Common myeloid progenitor, CD34-positive (primary cell): ENCODE measurements at regions of chr2 and their contacts with region 1.

Region 1: GRCh38 chr2:134245340-134245984 is 8.4 kb upstream of the MGAT5 start:
- DNase-seq: peak; percentile 78 to 91 (median 90)
- H3K4me3 ChIP-seq: peak overlapping the region in 1 of 7 experiments; percentile 36
- H3K27ac ChIP-seq: no peak overlapping the region
- H3K4me1 ChIP-seq: peaks cover 5 to 23% (median 15%) of the 10 kb centered on the region in 4 experiments
- H3K27me3 ChIP-seq: no peaks in the 10 kb centered on the region

Region 2: DNA sequence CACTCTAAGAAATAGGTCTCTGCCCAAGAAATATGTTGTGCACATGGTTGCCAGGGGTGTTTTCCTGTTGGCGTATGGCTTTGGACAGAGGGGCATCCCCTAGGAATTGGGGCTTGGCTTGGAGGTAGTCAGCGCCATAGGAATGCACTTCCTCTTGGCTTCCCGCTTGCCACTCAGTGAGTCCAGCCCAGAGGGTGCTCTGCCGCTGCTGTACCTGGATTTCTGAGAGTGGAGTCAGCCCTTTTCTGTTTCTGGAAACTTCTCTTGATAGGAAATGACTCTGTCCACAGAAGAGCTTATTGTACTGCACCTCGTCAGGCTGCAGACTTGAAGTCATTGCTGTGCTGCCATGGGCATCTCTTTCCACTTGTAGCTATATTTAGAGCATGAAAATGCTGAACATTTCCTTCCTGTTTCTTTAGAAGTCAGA is 108.3 kb before region 1 on chr2:
- CTCF ChIA-PET with region 1: interaction called, 13 read pairs
- POLR2A ChIA-PET with region 1: no interaction called
- DNase-seq: peak in 2 of 3 donors; percentile 61 to 76
- H3K4me3 ChIP-seq: peak overlapping the region in 6 of 7 experiments; percentile 11 to 68 (median 42)
- H3K27ac ChIP-seq: peak overlapping the region in 1 of 2 experiments; percentile 16
- H3K4me1 ChIP-seq: peaks cover 5 to 40% (median 20%) of the 10 kb centered on the region in 4 experiments
- H3K27me3 ChIP-seq: no peaks in the 10 kb centered on the region

Region 3: DNA sequence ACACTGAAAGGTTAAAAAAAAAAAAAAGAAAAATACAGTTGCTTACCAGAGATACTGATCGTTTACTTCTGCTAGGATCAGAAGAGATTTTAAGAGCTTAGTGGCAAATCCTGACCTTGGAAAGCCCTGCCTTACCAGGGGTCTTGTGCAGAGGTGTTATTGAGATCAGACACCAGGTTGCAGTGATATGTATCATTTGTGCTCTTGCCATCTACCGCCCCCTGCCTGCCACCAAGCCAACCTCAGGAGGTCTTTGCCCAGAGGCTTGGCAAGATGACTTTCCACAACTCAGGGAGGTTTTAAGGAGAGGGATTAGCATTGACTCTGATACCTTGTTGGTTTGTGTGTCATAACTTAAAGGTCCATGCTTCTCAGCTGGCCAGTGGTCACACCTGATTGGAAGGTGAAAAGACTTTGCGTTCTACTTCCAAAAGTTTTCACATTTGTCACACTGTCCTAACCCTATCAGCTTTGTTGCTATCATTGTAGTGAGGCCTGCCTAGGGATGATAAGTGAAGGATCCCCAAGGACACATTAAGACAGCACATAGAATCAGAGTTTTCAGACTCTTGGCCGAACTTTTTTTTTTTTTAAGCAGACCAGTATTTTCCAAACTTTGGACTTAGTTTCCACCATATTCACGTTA is 37.8 kb before region 1 on chr2:
- CTCF ChIA-PET with region 1: interaction called, 20 read pairs
- POLR2A ChIA-PET with region 1: no interaction called
- DNase-seq: peak; percentile 68 to 81 (median 78)
- H3K4me3 ChIP-seq: no peak overlapping the region
- H3K27ac ChIP-seq: no peak overlapping the region
- H3K4me1 ChIP-seq: peaks cover 3 to 23% (median 8%) of the 10 kb centered on the region in 4 experiments
- H3K27me3 ChIP-seq: no peaks in the 10 kb centered on the region

Region 4: DNA sequence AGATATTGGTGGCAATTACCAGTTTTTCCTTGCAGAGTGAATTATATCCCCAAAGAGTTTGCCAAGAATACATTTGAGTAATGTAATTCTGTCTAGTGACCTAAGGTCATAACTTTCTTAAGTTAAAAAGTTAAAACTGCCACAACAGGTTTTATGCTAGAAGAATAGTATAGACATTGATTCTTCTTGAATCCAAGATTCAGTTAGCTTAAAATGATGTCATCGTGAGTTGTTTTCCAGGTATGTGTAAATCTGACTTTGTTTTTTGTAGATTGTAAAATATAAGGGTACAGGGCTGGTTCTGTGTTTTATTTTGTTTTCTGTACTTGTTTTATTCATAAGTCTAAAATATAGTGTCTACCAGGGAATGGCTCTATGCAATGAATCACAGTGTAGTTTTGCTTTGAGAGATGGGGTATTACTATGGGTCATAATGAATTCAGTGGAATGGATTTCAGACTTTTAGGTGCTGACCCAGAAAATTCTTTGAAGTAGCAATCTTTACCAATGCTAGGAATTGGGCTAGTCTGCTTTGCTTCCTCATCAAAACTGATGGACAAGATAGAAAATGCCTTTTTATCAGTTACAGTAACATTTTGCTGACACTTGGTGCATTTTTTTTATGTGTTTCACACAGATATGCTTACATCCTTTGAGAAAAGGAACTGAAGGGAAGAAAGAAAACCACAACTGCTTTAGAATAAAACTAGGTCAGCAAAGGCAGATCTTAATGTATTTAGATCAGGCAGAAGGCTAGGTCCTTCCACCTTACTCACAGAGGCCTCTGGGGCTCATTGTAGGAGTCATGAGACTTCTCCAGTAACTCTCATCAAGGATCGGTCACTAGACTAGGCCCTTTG is 12.4 kb before region 1 on chr2:
- CTCF ChIA-PET with region 1: interaction called, 39 read pairs
- POLR2A ChIA-PET with region 1: no interaction called
- DNase-seq: peak in 2 of 3 donors; percentile 64 to 77
- H3K4me3 ChIP-seq: peak overlapping the region in 1 of 7 experiments; percentile 26
- H3K27ac ChIP-seq: no peak overlapping the region
- H3K4me1 ChIP-seq: peaks cover 17 to 35% (median 25%) of the 10 kb centered on the region in 4 experiments
- H3K27me3 ChIP-seq: no peaks in the 10 kb centered on the region

Region 5: DNA sequence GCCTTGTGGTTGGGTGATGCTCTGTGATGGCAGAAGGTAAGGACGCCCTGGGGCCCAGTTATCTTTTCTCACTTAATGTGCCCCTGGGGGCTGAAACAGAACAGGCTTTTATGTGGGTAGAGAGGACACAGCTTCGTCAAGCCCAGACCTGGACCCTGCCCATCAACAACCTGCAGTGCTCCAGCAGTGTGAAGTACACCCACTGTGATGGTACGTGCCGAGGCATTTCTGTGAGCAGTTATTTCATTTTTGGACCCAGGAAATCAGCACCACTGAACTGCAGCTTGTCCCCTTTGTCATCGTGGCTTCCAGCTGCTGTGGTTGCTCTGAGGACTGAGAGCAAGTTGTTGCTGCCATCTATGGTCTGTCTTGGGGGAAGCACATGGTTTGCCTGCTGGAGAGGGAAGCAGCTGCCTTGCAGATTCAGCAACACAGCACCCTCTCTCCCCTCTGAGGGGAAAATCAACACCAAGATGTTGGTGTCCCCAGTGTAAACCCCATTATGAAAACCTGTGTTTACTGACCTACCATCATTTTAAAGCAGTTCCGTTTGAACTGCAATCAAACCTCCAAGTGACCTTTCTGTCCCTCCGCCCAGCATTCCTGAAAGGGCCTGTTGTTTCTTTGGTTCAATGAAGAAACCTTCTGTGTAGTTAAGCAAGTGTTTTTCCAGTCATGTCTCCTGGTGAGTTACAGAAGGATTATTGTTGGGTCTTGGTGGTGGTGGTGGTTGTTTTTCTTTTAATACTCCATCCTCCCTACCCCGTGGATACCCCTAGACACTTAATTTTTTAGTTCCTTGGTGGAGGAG is 166.6 kb after region 1 on chr2:
- CTCF ChIA-PET with region 1: interaction called, 17 read pairs
- POLR2A ChIA-PET with region 1: no interaction called
- DNase-seq: peak; percentile 78 to 91 (median 90)
- H3K4me3 ChIP-seq: no peak overlapping the region
- H3K27ac ChIP-seq: no peak overlapping the region
- H3K4me1 ChIP-seq: peaks cover 6 to 14% (median 8%) of the 10 kb centered on the region in 4 experiments
- H3K27me3 ChIP-seq: no peaks in the 10 kb centered on the region